ENCODE measurements at regions of chr5 and their contacts with region 1.

Region 1: GRCh38 chr5:20050262-20050661 is 62.3 kb upstream of the CDH18 start:
- DNase-seq: peak; percentile 48
- ATAC-seq: peak; percentile 82
- H3K4me3 ChIP-seq: no peak overlapping the region
- H3K27ac ChIP-seq: peak overlapping the region; percentile 19
- H3K4me1 ChIP-seq: peaks cover 20% of the 10 kb centered on the region
- H3K27me3 ChIP-seq: no peaks in the 10 kb centered on the region
- CTCF ChIP-seq: no peak

Region 2: DNA sequence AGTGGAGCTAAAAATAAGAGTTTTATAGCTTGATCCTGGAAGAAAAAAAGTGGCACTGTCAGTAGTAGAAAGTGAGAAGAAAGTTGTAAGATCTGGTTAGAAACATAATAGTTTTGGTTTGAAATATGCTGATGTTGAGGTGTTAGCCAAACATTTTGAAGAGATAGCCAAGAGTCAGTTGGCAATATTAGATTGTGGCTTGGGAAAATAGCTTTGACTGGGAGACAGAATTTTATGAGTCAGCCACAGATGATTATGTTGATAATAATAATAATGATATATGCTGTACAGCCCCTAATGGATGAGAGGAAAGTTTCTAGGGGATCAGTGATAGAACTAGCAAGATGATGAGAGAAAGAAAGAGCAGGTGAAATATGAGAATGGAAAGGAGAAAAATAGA is 49.8 kb before region 1 on chr5:
- CTCF ChIA-PET with region 1: no interaction called
- POLR2A ChIA-PET with region 1: no interaction called
- intact Hi-C with region 1: loop called (anchors 5 kb)
- DNase-seq: no peak
- ATAC-seq: no peak
- H3K4me3 ChIP-seq: no peak overlapping the region
- H3K27ac ChIP-seq: no peak overlapping the region
- H3K4me1 ChIP-seq: no peaks in the 10 kb centered on the region
- H3K27me3 ChIP-seq: no peaks in the 10 kb centered on the region
- CTCF ChIP-seq: no peak

Region 3: DNA sequence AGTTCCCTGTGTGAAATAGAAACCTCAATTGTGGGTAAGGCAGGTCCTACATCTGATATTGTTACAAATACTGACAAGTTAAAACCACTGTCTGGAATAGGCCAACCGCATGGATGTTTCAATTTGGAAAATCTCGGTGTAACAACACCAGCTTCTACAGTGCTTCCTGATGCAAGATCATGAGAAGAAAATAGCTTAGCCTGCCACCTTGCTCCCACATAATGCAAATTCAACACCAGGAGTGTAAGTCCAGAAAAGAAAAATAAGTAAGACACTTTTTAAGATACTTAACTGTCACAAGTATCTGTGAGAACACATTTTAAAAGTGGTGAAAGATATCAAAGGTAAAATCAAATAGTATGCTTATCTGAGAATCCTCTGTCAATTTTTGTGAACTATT is 385.2 kb after region 1 on chr5:
- CTCF ChIA-PET with region 1: no interaction called
- POLR2A ChIA-PET with region 1: no interaction called
- intact Hi-C with region 1: no loop called
- DNase-seq: peak; percentile 14
- ATAC-seq: no peak
- H3K4me3 ChIP-seq: no peak overlapping the region
- H3K27ac ChIP-seq: no peak overlapping the region
- H3K4me1 ChIP-seq: no peaks in the 10 kb centered on the region
- H3K27me3 ChIP-seq: no peaks in the 10 kb centered on the region
- CTCF ChIP-seq: 0 out of 2 replicates have a peak, but pooled peaks have one; percentile 14

Measured in PC-3 (cell line).